AG04450 (cell line): ENCODE measurements at regions of chr12 and their contacts with region 1.

Region 1: DNA sequence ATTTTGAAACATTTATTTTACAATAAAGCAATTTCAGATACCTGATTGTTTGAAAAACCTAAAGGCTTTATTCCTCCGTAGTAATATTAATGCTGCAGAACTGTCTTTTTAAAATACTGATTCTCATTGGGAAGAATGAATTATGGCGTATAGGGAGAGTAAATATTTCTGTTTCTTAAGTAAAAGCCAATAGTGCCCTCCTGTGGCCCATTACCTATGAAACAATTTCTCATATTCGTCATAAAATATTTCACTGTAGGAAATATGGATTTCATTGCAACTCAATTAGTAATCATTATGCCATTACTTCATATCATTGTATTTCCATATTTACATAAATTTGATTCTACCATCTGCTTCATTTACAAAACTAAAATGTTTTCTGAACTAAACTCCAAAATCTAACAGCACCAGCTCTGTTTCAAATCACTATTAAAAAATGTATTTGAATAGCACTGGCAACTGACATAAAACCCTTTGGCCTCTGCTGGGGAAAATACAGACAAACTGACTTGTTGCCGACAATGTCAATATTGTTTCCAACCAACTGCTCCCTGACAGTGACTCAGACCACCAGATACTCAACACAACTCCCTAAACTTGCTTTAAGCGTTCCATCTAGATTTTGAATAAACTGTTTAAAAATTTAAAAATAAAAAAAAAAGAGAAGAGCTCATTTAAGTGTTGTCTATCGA is 290.3 kb downstream of the NAV3 start:
- DNase-seq: no peak
- H3K4me3 ChIP-seq: no peak overlapping the region
- H3K27ac ChIP-seq: no peak overlapping the region
- H3K27me3 ChIP-seq: no peaks in the 10 kb centered on the region
- CTCF ChIP-seq: peak; percentile 41

Region 2: GRCh38 chr12:77888611-77889010 is 232.4 kb before region 1 on chr12:
- CTCF ChIA-PET with region 1: no interaction called
- POLR2A ChIA-PET with region 1: no interaction called
- DNase-seq: peak; percentile 29
- H3K4me3 ChIP-seq: no peak overlapping the region
- H3K27ac ChIP-seq: no peak overlapping the region
- H3K27me3 ChIP-seq: no peaks in the 10 kb centered on the region
- CTCF ChIP-seq: no peak

Region 3: GRCh38 chr12:77999074-77999715 is 121.8 kb before region 1 on chr12:
- CTCF ChIA-PET with region 1: interaction called, 52 read pairs
- POLR2A ChIA-PET with region 1: no interaction called
- DNase-seq: no peak
- H3K4me3 ChIP-seq: no peak overlapping the region
- H3K27ac ChIP-seq: no peak overlapping the region
- H3K27me3 ChIP-seq: no peaks in the 10 kb centered on the region
- CTCF ChIP-seq: no peak

Region 4: DNA sequence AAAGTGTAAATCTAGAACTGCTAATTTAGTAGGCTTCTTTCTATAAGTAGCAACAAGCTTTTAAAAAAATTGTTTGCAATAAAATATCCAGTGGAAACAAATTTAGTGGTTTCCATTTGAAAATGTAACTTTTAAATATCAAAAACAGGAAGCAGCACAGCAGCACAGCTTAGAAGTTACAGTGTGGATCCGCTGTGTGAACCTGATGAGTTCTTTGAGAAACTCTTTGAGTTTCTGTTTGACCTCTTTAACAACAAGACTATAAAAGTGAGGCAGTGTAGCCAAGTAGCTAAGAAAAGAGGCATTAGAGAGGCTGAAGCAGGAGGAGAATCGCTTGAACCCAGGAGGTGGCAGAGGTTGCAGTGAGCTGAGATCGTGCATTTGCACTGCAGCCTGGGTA is 112.0 kb before region 1 on chr12:
- CTCF ChIA-PET with region 1: interaction called, 13 read pairs
- POLR2A ChIA-PET with region 1: no interaction called
- DNase-seq: no peak
- H3K4me3 ChIP-seq: no peak overlapping the region
- H3K27ac ChIP-seq: no peak overlapping the region
- H3K27me3 ChIP-seq: no peaks in the 10 kb centered on the region
- CTCF ChIP-seq: no peak

Region 5: DNA sequence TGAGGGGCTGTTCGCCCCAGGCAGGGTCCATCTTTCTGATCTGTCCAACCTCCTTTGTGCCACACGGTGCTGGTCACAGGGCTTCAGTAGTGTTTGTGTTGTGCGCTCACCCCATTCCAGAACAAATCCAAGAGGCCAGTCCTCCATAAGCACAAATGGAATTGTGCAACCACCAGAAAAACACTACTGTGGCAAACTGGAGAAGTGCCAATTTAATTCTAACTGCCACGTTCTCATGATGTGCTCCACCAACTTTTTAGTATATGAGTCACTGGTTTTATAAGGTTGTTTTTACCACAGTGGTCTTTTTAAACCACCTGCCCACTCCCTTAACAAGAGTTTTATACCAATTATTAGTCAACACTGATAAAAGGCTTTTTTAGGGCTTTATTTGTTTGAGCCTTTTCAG is 89.9 kb after region 1 on chr12:
- CTCF ChIA-PET with region 1: no interaction called
- POLR2A ChIA-PET with region 1: no interaction called
- DNase-seq: no peak
- H3K4me3 ChIP-seq: no peak overlapping the region
- H3K27ac ChIP-seq: no peak overlapping the region
- H3K27me3 ChIP-seq: no peaks in the 10 kb centered on the region
- CTCF ChIP-seq: no peak